ENCODE measurements at regions of chr10 and their contacts with region 1.

Region 1: GRCh38 chr10:96831867-96832720 is at the start of gene LCOR:
- DNase-seq: peak; percentile 84 to 87
- H3K4me3 ChIP-seq: peak within 1 kb of the TSS; percentile 73 to 89
- H3K27ac ChIP-seq: peak within 1 kb of the TSS; percentile 99
- H3K4me1 ChIP-seq: peaks cover 0 to 5% of the 10 kb centered on the region in 2 donors
- H3K27me3 ChIP-seq: no peaks in the 10 kb centered on the region
- CTCF ChIP-seq: peak in 2 of 4 experiments; percentile 13 to 25
- POLR2A ChIP-seq: peak; percentile 67 to 79
- total RNA-seq, gene LCOR: 7.7 to 2,027 (median 132) TPM

Region 2: DNA sequence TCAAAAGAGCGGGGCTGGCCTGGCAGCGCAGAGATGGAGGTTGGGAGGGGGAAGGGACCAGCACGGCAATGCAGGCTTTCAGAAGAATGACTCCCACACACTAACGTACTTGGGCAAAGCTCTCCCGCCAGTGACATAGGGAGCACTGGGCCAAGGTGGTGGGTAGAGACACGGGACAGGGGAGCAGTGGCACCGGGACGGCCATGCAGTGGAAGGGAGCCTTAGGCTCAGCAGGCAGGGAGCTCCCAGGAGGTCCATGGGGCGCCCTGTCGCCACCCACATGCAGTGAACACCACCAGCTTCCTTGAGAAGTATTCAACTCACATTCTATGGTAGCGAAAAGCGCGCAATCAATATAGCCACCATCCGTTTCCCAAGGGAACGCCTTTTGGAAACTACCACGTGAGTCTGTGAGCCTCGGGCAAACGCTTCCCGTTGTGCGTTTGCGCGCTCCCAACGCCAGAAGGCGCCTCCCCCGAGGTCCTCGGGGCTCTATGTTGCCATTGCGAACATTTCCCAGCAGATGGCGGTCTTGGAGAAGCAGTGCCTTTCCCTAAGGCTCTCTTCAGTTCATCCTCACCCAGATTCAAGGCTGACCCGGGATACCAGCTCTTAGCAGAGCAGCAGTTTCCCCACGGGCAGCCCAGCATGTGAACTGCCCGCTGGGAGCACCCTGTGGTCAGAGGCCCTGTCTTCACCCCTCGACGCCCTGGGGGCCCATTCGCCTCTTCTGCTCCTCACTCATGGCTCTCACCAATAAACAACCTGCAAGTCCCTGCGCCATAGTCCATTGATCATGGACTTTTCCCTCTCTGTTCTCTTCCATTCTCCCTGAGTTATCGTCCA is 456.9 kb before region 1 on chr10:
- intact Hi-C with region 1: loop called (anchors 10 kb)
- DNase-seq: peak; percentile 86 to 87
- H3K4me3 ChIP-seq: peak overlapping the region; percentile 22 to 43
- H3K27ac ChIP-seq: peak overlapping the region in 1 of 2 donors; percentile 21
- H3K4me1 ChIP-seq: peaks cover 4 to 8% of the 10 kb centered on the region in 2 donors
- H3K27me3 ChIP-seq: no peaks in the 10 kb centered on the region
- CTCF ChIP-seq: peak; percentile 95 to 98 (median 96)
- POLR2A ChIP-seq: no peak

Measured in uterus (tissue), 4 donors.